AG04450 (cell line): ENCODE measurements at regions of chr1 and their contacts with region 1.

Region 1: GRCh38 chr1:202046227-202046801 is 35.9 kb downstream of the ELF3 start:
- DNase-seq: no peak
- H3K4me3 ChIP-seq: no peak overlapping the region
- H3K27ac ChIP-seq: no peak overlapping the region
- H3K27me3 ChIP-seq: peaks cover 13% of the 10 kb centered on the region
- CTCF ChIP-seq: no peak

Region 2: GRCh38 chr1:202034683-202035462 is 11.4 kb before region 1 on chr1:
- CTCF ChIA-PET with region 1: no interaction called
- POLR2A ChIA-PET with region 1: no interaction called
- DNase-seq: peak; percentile 89
- H3K4me3 ChIP-seq: no peak overlapping the region
- H3K27ac ChIP-seq: peak overlapping the region; percentile 63
- H3K27me3 ChIP-seq: no peaks in the 10 kb centered on the region
- CTCF ChIP-seq: no peak

Region 3: GRCh38 chr1:202063100-202063499 is 16.8 kb after region 1 on chr1:
- CTCF ChIA-PET with region 1: no interaction called
- POLR2A ChIA-PET with region 1: interaction called, 13 read pairs
- DNase-seq: peak; percentile 11
- H3K4me3 ChIP-seq: no peak overlapping the region
- H3K27ac ChIP-seq: no peak overlapping the region
- H3K27me3 ChIP-seq: peaks cover 3% of the 10 kb centered on the region
- CTCF ChIP-seq: no peak

Region 4: DNA sequence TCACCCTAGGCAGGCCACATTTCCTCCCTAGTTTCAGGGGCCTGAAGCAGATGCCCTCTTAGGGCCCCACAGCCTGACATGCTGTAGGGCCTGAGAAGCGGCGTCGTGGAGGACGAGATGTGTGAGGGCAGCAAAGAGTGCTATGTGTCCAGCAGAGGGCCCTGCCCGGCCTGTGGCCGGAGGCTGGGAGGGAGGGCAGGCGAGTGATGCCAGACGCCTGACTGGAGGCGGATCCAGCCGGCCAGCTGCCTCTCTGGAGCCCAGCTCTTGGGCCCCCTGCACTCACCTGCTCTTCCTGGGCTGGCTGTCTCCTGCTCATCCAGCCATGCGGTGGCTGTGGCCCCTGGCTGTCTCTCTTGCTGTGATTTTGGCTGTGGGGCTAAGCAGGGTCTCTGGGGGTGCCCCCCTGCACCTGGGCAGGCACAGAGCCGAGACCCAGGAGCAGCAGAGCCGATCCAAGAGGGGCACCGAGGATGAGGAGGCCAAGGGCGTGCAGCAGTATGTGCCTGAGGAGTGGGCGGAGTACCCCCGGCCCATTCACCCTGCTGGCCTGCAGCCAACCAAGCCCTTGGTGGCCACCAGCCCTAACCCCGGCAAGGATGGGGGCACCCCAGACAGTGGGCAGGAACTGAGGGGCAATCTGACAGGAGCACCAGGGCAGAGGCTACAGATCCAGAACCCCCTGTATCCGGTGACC is 76.5 kb after region 1 on chr1 and contains the start of gene GPR37L1:
- CTCF ChIA-PET with region 1: no interaction called
- POLR2A ChIA-PET with region 1: no interaction called
- DNase-seq: no peak
- H3K4me3 ChIP-seq: no peak within 1 kb of the TSS
- H3K27ac ChIP-seq: no peak within 1 kb of the TSS
- H3K27me3 ChIP-seq: peaks cover 26% of the 10 kb centered on the region
- CTCF ChIP-seq: peak; percentile 57
- polyA plus RNA-seq, gene GPR37L1: not detected in 2 replicates